ENCODE measurements at regions of chr12 and their contacts with region 1.

Region 1: DNA sequence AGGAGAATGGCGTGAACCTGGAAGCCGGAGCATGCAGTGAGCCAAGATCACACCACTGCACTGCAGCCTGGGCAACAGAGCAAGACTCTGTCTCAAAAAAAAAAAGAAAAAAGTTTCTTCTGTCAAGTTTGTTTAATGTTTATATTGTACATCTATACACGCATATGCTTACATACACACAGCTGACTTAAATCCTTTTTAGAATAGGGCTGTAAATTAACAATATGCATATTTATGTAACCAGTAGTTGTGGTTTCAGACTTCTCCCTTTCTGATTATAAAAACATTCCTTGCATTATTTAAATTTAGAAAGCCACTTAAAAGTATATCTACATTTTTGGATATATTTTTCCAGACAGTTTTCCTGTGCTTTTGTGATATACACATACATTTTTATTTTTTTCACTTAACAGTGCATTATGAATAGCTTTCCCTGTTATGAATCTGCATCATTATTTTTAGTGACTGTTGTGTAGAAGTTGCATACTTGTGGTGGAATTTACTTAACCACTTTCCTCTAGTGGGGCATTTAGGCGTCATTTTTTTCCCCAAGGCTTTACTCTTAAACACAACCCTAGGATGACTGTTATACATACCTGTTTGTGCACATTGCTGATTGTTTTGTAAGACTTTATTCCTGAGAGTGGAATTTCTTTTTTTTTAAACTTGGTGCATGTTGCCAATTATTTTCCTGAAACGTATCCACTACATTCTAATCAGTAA is 29.4 kb downstream of the POLR3B start:
- DNase-seq: no peak
- H3K4me3 ChIP-seq: no peak overlapping the region
- H3K27ac ChIP-seq: no peak overlapping the region
- H3K4me1 ChIP-seq: no peaks in the 10 kb centered on the region
- H3K27me3 ChIP-seq: no peaks in the 10 kb centered on the region
- CTCF ChIP-seq: no peak
- EP300 ChIP-seq: no peak
- POLR2A ChIP-seq: no peak

Region 2: GRCh38 chr12:106317406-106318082 is 69.4 kb before region 1 on chr12:
- intact Hi-C with region 1: no loop called
- DNase-seq: no peak
- H3K4me3 ChIP-seq: no peak overlapping the region
- H3K27ac ChIP-seq: no peak overlapping the region
- H3K4me1 ChIP-seq: peaks cover 0 to 10% (median 6%) of the 10 kb centered on the region in 4 donors
- H3K27me3 ChIP-seq: no peaks in the 10 kb centered on the region
- CTCF ChIP-seq: no peak
- EP300 ChIP-seq: no peak
- POLR2A ChIP-seq: no peak

Region 3: GRCh38 chr12:106919910-106920544 is 533.1 kb after region 1 on chr12:
- intact Hi-C with region 1: loop called (anchors 10 kb)
- DNase-seq: peak in 1 of 2 donors; percentile 75
- H3K4me3 ChIP-seq: no peak overlapping the region
- H3K27ac ChIP-seq: no peak overlapping the region
- H3K4me1 ChIP-seq: no peaks in the 10 kb centered on the region
- H3K27me3 ChIP-seq: peaks cover 0 to 16% (median 0%) of the 10 kb centered on the region in 3 donors
- CTCF ChIP-seq: peak in 5 of 7 experiments; percentile 38 to 92 (median 75)
- EP300 ChIP-seq: no peak
- POLR2A ChIP-seq: no peak

Measured in stomach (tissue), 19 donors.